ENCODE measurements at regions of chr9 and their contacts with region 1.

Region 1: GRCh38 chr9:96449845-96450612 is at the start of gene HABP4:
- DNase-seq: peak; percentile 38
- ATAC-seq: peak; percentile 96
- H3K4me3 ChIP-seq: peak within 1 kb of the TSS; percentile 65 to 78
- H3K27ac ChIP-seq: peak within 1 kb of the TSS; percentile 82
- H3K4me1 ChIP-seq: peaks cover 12% of the 10 kb centered on the region
- H3K27me3 ChIP-seq: no peaks in the 10 kb centered on the region
- CTCF ChIP-seq: no peak
- total RNA-seq, gene HABP4: 32.3 TPM

Region 2: GRCh38 chr9:96435345-96435744 is 14.7 kb before region 1 on chr9:
- CTCF ChIA-PET with region 1: no interaction called
- POLR2A ChIA-PET with region 1: interaction called, 14 read pairs
- in situ Hi-C with region 1: no loop called
- intact Hi-C with region 1: no loop called
- DNase-seq: no peak
- ATAC-seq: no peak
- H3K4me3 ChIP-seq: no peak overlapping the region
- H3K27ac ChIP-seq: no peak overlapping the region
- H3K4me1 ChIP-seq: no peaks in the 10 kb centered on the region
- H3K27me3 ChIP-seq: no peaks in the 10 kb centered on the region
- CTCF ChIP-seq: no peak

Region 3: DNA sequence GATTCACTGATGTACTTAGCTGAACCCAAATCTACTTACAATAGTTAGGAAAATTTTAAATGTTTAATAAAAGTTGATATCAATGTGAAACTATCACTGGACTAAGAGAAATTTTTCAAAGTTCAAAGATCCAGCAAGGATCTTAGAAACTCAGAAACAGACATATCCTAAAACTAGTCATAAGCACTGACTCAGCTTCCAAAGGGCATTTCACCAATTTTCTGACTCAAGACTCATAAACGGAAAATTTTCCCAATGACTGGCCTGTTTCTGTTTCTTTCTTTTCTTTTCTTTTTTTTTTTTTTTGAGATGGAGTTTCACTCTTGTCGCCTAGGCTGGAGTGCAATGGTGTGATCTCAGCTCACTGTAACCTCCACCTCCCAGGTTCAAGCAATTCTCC is 103.0 kb after region 1 on chr9:
- CTCF ChIA-PET with region 1: no interaction called
- POLR2A ChIA-PET with region 1: no interaction called
- in situ Hi-C with region 1: no loop called
- intact Hi-C with region 1: no loop called
- DNase-seq: no peak
- ATAC-seq: no peak
- H3K4me3 ChIP-seq: no peak overlapping the region
- H3K27ac ChIP-seq: no peak overlapping the region
- H3K4me1 ChIP-seq: peaks cover 20% of the 10 kb centered on the region
- H3K27me3 ChIP-seq: no peaks in the 10 kb centered on the region
- CTCF ChIP-seq: no peak

Region 4: DNA sequence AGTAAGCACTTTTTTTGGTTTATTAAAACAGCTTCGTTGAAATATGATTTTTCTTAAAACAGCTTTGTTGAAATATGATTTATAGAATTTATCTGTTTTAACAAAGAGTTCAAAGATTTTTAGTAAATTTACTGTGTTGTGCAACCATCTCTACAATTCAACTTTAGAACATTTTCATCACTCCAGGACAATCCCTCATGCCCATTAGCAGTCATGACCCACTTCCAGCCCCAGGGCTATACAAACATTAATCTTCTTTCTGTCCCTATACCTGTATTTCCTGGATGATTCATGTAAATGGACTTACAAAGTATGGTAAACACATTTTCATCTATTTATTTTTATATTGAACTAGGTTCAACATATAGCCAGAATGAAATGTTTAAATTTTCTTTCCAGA is 729.5 kb after region 1 on chr9:
- CTCF ChIA-PET with region 1: no interaction called
- POLR2A ChIA-PET with region 1: interaction called, 11 read pairs
- in situ Hi-C with region 1: no loop called
- intact Hi-C with region 1: no loop called
- DNase-seq: no peak
- ATAC-seq: no peak
- H3K4me3 ChIP-seq: no peak overlapping the region
- H3K27ac ChIP-seq: no peak overlapping the region
- H3K4me1 ChIP-seq: no peaks in the 10 kb centered on the region
- H3K27me3 ChIP-seq: no peaks in the 10 kb centered on the region
- CTCF ChIP-seq: no peak

Measured in Panc1 (cell line).